ENCODE measurements at regions of chr12 and their contacts with region 1.

Region 1: DNA sequence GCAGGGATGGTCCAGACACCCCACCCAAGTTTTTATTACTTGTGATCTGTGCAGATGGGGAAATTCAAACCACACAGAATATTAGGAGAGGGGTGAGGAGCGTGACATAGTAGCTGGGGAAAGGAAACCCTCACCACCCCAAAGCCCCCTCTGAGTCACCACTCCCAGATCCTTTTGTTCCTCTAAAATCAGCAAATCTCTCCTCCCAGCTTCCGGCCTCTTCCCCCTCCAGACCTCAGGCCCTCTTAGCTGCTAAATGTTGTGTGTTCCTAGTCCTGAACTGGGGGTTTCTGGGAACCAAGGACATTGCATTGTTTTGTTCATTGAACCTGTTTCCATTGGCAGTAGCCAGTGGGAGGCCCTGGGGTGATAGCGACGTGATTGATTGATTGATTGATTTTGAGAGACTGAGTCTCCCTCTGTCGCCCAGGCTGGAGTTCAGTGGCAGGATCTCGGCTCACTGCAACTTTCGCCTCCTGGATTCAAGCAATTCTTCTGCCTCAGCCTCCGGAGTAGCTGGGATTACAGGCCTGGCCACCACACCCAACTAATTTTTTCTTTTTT is 5.9 kb upstream of the ORAI1 start:
- DNase-seq: no peak
- CTCF ChIP-seq: no peak

Region 2: DNA sequence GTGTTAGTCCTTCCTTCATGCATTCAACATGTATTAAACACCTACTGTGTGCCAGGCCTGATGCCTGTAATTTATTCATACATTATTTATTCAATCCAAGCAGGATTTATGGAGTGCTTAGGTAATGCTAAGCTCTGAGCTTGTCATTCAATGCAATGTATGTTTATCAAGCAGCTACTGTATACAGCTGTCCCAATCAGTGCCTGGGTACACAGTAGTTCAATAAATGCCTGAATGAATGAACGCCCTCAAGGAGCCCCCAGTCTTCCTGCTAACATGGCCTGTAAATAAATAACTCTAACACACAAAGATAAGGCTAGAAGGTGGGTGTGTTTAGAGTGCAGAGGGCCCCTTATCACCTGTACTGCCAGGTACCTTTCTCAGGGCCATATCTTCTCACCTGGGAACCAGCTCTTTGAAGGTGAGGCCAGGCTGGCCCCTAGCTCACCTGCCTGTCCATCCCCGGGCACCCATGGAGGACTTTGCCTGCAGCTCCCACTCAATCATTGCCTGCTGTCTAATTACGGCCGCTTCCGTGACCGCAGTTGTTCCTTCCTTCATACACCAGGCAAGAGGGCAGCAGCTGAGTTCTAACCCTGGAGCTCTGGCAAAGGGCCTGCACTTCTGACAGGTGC is 19.6 kb before region 1 on chr12:
- CTCF ChIA-PET with region 1: interaction called, 13 read pairs
- POLR2A ChIA-PET with region 1: no interaction called
- DNase-seq: no peak
- CTCF ChIP-seq: no peak

Measured in GM10248 (cell line).